ENCODE measurements at regions of chr16 and their contacts with region 1.

Region 1: GRCh38 chr16:4176612-4177417 is 60.6 kb upstream of the ADCY9 start:
- DNase-seq: no peak
- ATAC-seq: no peak
- H3K4me3 ChIP-seq: no peak overlapping the region
- H3K27ac ChIP-seq: no peak overlapping the region
- H3K4me1 ChIP-seq: no peaks in the 10 kb centered on the region
- H3K27me3 ChIP-seq: no peaks in the 10 kb centered on the region

Region 2: DNA sequence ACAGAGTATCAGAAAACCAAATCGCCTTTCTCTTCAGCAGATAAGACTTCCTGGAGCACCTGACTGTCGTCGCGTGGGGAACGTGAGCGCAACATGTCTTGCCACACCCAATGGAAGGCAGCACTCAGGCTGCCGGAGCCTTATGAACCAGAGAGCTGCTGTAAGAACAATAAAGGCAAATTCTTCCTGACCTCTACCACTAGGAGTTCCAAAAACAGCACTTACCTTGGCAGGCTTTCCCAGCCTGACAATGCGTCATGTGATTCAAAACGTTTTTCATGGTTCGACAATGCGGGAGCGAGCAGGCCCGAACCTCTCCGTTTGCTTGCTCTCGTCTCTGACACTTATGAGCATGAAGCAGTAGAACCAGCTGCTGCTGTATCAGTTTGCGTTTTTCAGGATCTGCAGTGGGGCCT is 383.6 kb before region 1 on chr16:
- intact Hi-C with region 1: loop called in 1 of 4 experiments (anchors 10 kb)
- DNase-seq: peak; percentile 62 to 79 (median 72)
- ATAC-seq: peak; percentile 80 to 93
- H3K4me3 ChIP-seq: no peak overlapping the region
- H3K27ac ChIP-seq: peak overlapping the region; percentile 50
- H3K4me1 ChIP-seq: peaks cover 5% of the 10 kb centered on the region
- H3K27me3 ChIP-seq: no peaks in the 10 kb centered on the region

Region 3: DNA sequence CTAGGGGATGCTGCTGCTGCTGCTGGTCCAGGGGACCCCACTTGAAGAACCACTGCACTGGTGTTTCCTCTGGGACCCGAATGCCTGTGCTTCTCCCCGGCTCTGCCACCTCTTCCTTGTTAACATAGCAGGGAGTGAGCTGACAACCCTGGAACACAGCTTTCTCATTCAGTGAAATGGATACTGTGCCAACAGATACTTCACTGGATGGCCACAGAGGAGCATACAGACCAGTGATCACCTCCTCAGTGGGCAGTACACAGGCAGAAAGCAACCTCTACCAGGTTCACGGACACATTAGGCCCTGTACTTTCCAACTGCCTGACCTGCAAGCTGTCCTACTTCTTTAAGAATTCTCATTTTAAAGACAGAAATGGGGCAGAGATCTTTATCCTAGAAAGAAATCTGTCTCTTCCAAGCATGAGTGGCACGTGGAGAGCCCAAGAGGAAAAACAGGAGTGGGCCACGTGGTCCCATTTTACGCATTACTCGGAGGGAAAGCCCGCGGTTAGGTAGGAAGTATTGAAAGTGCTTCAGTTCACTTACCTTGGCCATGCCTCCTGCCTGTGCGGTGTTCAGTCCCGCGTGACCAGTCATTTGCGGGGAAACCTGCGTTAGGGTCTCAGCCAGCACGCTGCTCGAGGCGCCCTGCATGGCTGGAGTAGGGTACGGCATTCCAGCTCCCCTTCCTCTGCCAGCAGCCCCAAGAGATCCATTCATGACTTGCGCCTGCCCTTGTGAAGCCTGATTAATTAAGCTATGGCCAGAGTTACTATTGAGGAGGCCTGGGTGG is 326.9 kb before region 1 on chr16:
- intact Hi-C with region 1: no loop called
- DNase-seq: no peak
- ATAC-seq: peak in 1 of 2 donors; percentile 31
- H3K4me3 ChIP-seq: no peak overlapping the region
- H3K27ac ChIP-seq: no peak overlapping the region
- H3K4me1 ChIP-seq: peaks cover 11% of the 10 kb centered on the region
- H3K27me3 ChIP-seq: no peaks in the 10 kb centered on the region

Region 4: DNA sequence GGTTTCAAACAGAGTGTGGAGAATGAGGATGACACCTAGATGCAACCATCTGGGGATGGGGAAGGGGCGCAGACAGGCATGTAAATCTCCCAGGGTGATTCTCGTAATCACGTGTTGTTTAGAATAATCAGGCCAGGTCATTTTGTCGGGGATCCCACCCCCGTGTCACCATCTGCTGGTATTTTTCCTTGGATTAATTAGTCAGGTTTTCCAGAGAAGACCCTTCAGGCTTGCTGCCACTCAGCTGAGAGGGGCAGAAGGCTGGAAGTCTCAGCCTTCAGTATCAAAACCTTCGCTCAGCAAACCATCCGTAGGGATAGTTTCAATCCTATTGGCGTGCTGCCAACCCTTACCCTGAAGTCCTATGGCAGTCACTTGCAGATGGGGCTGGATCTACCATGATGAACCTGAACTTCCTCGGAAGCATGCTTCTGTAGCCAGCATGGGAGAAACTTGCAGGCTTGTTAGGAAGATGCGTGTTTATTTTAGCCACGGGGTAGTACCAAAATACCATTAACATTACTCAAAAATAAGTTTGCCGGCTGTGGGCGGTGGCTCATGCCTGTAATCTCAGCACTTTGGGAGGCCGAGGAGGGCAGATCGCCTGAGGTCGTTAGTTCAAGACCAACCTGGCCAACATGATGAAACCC is 53.1 kb before region 1 on chr16:
- intact Hi-C with region 1: loop called in 2 of 4 experiments (anchors 5 to 10 kb)
- DNase-seq: no peak
- ATAC-seq: no peak
- H3K4me3 ChIP-seq: no peak overlapping the region
- H3K27ac ChIP-seq: no peak overlapping the region
- H3K4me1 ChIP-seq: no peaks in the 10 kb centered on the region
- H3K27me3 ChIP-seq: no peaks in the 10 kb centered on the region